Colonic mucosa (tissue), 4 donors: ENCODE measurements at regions of chr17 and their contacts with region 1.

Region 1: GRCh38 chr17:78313735-78314648 is 45.9 kb downstream of the SOCS3 start:
- DNase-seq: peak; percentile 93
- H3K4me3 ChIP-seq: peak overlapping the region; percentile 40
- H3K27ac ChIP-seq: peak overlapping the region; percentile 98
- H3K4me1 ChIP-seq: peaks cover 38% of the 10 kb centered on the region
- H3K27me3 ChIP-seq: no peaks in the 10 kb centered on the region
- CTCF ChIP-seq: no peak

Region 2: DNA sequence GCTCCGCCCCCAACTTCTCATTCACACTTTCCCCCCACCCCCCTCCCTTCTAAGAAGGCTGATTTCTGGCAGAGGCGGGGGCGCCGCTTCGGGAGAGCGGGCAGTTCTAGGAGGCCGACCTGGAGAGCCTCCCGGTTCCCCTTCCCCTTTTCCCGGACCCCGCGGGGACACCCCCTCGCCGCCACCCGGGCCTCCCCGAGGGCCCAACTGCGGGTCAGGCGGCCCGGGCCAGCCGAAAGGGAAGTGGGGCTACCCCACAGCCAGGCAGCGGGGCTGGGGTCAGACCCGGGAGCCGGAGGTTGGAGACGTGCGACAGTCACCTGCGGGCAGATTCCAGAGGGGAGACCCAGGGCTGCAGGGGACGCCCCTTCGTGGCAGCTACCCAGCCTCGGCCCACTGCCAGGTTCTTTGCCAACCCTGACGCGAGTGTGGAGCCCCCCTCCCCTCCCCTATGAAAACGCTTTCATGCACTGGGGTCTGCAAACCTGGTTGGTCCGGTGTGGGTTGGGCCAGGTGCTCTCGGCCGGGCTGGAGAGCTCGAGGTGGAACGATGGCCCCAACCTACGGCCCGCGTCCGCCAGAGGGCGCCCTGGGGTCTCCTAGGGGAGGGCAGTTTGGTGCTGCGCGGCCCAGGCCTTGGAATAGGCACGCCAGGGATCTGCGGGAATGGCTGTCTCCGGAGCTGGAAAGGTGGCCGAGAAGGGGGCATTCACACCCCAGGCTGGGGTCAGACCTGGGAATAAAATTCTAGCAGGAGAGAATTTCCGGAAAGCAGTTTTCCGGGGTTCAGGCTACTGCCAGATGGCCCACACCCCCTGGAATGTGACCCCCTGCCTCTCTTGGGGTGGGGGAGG is 46.6 kb after region 1 on chr17:
- intact Hi-C with region 1: loop called (anchors 5 kb)
- DNase-seq: peak; percentile 99
- H3K4me3 ChIP-seq: peak overlapping the region; percentile 55
- H3K27ac ChIP-seq: peak overlapping the region; percentile 96
- H3K4me1 ChIP-seq: peaks cover 7% of the 10 kb centered on the region
- H3K27me3 ChIP-seq: no peaks in the 10 kb centered on the region
- CTCF ChIP-seq: peak; percentile 92